Right ventricle myocardium inferior (tissue), 1 donor: ENCODE measurements at regions of chr7 and their contacts with region 1.

Region 1: GRCh38 chr7:73865738-73866445 is 4.9 kb downstream of the TMEM270 start:
- DNase-seq: no peak
- ATAC-seq: peak; percentile 76

Region 2: DNA sequence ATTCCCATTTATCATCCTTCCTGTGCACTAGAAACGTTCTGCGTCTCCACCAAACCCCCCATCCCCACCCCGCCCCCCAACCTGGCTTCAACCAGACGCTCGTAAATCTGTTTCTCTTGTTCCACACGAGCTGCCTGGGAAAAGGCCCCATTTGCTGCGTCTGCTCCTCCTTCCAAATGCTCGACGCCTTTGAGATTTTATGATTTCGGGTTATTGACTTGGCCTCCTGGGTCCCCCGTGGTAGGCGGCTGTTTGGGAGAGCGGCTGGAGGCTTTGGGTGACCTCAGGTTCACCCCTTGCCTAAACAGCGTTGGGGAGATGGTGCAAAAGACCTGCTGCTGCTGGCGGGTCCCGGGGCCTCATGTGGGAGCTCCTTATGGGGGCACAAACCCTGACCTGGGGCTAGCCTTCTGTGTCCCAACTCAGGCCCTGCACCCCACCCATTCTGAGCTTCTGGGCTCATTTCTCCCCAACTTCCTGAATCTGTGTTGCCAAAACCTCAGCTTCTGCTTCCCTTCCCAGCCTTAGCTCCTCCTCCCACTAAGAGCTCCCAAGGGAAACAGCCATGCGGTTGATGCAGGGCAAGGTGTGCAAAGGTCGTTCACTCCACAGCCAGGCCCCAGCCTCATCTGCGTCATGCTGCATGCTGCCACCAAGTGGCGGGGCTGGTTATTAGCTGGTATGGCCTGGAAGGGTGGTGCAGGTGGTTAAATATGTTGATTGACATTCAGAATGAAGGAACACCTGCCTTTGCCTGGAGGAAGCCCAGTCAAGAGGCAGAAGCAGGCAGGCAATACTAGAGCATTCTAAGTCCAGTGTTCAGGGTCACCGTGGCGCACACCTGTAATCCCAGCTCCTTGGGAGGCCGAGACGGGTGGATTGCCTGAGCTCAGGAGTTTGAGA is 113.0 kb after region 1 on chr7:
- intact Hi-C with region 1: loop called (anchors 2 kb)
- DNase-seq: no peak
- ATAC-seq: no peak

Region 3: DNA sequence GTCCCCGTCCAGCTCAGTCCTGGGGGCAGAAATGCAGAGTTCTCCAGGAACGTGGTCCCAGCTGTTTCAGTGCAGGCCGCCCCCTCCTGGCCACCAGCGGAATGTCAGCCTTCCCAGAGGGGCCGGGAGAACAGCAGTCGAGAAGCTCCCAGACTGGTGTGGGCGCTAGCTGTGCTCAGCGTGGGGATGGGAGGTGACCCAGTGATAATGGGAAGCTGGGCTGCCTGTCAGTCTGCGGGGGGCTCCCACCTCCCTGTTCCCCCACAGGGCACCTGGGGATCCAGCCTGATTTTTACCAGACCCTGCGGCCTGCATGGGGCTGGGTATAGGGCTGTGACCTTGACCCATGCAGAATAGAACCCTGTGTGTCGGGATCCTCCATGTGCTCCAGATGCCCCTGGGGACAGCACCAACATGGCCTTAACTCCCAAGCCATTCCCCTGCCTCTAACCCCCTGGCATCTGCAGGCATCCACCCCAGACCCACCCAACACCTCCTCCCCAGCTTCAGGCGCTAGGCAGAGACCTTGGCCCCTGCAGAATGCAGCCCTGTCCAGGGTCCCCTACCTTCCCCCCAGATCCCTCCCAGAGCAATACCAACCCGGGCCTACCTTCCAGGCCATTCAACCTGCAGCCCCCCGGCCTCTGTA is 161.1 kb after region 1 on chr7:
- intact Hi-C with region 1: loop called (anchors 2 kb)
- DNase-seq: peak; percentile 90
- ATAC-seq: peak; percentile 63

Region 4: GRCh38 chr7:74173866-74174605 is 308.1 kb after region 1 on chr7 and contains the start of gene EIF4H:
- intact Hi-C with region 1: loop called (anchors 10 kb)
- DNase-seq: peak; percentile 98
- ATAC-seq: peak; percentile 98
- total RNA-seq, gene EIF4H: 172 TPM

Region 5: DNA sequence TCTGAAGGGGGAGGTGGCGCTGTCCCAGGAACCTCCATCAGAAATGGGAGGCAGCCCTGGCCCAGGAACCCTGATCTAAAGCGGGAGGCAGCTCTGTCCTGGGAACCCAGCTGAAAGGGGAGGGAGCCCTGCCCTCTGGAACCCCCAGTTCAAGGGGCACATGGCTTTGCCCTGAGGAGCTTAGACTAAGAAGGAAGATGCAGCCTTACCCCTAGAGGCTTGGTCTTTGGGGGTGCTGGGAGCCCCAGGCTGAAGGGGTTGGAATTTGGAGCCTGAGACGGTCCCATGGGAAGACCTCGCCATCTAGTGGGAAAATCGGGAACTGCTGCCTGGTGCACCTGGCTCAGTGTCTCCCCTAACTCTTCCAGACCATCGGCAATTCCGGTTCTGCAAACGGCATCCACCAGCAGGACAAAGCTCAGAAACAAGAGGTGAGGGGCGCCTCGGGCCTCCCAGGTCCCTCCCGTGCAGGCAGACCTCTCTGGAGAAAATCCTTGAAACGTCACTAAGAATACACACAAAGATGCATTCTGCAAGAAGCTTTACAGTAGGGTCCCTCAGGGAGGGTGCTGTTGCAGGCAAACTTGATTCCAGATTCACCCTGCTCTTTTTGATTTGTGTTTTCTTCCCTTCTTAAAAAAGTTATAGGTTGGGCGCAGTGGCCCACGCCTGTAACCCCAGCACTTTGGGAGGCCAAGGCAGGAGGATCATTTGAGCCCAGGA is 535.4 kb after region 1 on chr7:
- intact Hi-C with region 1: loop called (anchors 10 kb)
- DNase-seq: peak; percentile 76
- ATAC-seq: peak; percentile 53